ENCODE measurements at regions of chr10 and their contacts with region 1.

Region 1: DNA sequence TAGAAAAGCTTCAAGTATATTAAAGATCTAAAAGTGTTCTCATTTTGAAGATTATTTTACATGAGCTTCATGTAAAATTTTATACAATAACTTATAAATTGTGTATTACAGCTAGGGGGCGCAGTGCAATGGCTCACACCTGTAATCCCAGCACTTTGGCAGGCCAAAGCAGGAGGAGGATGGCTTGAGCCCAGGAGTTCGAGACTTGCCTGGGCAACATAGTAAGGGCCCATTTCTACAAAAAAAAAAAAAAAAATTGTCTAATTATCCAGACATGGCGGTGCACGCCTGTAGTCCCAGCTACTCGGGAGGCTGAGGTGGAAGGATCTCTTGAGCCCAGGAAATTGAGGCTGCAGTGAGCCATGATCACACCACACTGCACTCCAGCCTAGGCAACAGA is 16.6 kb downstream of the ACBD5 start:
- DNase-seq: no peak
- ATAC-seq: peak; percentile 60
- H3K4me3 Mint-ChIP-seq: no peak overlapping the region
- H3K27ac Mint-ChIP-seq: peak overlapping the region; percentile 20
- H3K4me1 Mint-ChIP-seq: no peaks in the 10 kb centered on the region
- H3K27me3 Mint-ChIP-seq: no peaks in the 10 kb centered on the region
- CTCF ChIP-seq: peak; percentile 84

Region 2: DNA sequence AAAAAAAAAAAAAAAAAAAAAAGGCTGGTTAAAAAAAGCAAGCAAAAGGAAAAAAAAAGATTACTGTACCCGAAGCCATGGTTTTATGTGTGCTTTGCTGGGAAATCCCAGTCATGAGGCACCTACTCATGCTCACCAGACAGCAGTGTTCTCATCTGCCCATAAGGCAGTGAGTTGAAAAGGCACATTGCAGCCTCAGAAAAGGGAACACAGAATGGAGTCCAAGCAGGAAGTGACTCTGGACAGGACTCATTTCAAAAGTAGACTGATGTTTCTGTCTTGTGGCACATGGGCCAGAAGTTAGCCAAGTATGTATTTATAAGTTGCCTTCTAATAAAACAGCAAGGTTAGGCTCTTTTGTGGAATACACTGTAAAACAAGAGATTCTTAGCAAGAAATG is 486.2 kb before region 1 on chr10:
- CTCF ChIA-PET with region 1: no interaction called
- POLR2A ChIA-PET with region 1: no interaction called
- intact Hi-C with region 1: no loop called
- DNase-seq: no peak
- ATAC-seq: peak; percentile 84
- H3K4me3 Mint-ChIP-seq: peak overlapping the region; percentile 63
- H3K27ac Mint-ChIP-seq: peak overlapping the region; percentile 95
- H3K4me1 Mint-ChIP-seq: peaks cover 67% of the 10 kb centered on the region
- H3K27me3 Mint-ChIP-seq: no peaks in the 10 kb centered on the region
- CTCF ChIP-seq: no peak

Region 3: GRCh38 chr10:27235706-27236105 is 11.7 kb after region 1 on chr10:
- CTCF ChIA-PET with region 1: interaction called, 12 read pairs
- POLR2A ChIA-PET with region 1: no interaction called
- intact Hi-C with region 1: loop called (anchors 1 kb)
- DNase-seq: no peak
- ATAC-seq: no peak
- H3K4me3 Mint-ChIP-seq: no peak overlapping the region
- H3K27ac Mint-ChIP-seq: no peak overlapping the region
- H3K4me1 Mint-ChIP-seq: peaks cover 21% of the 10 kb centered on the region
- H3K27me3 Mint-ChIP-seq: no peaks in the 10 kb centered on the region
- CTCF ChIP-seq: no peak

Region 4: GRCh38 chr10:27285108-27285507 is 61.1 kb after region 1 on chr10:
- CTCF ChIA-PET with region 1: interaction called, 6 read pairs
- POLR2A ChIA-PET with region 1: no interaction called
- intact Hi-C with region 1: loop called (anchors 1 kb)
- DNase-seq: no peak
- ATAC-seq: no peak
- H3K4me3 Mint-ChIP-seq: no peak overlapping the region
- H3K27ac Mint-ChIP-seq: no peak overlapping the region
- H3K4me1 Mint-ChIP-seq: no peaks in the 10 kb centered on the region
- H3K27me3 Mint-ChIP-seq: peaks cover 2% of the 10 kb centered on the region
- CTCF ChIP-seq: no peak

Region 5: GRCh38 chr10:27426948-27427467 is 203.0 kb after region 1 on chr10:
- CTCF ChIA-PET with region 1: no interaction called
- POLR2A ChIA-PET with region 1: no interaction called
- intact Hi-C with region 1: no loop called
- DNase-seq: no peak
- ATAC-seq: no peak
- H3K4me3 Mint-ChIP-seq: no peak overlapping the region
- H3K27ac Mint-ChIP-seq: no peak overlapping the region
- H3K4me1 Mint-ChIP-seq: no peaks in the 10 kb centered on the region
- H3K27me3 Mint-ChIP-seq: peaks cover 6% of the 10 kb centered on the region
- CTCF ChIP-seq: no peak

Measured in activated B cell treated with CpG ODN at 0.5 μM for 24 hours (primary cell).